PC-9 (cell line): ENCODE measurements at regions of chr1 and their contacts with region 1.

Region 1: GRCh38 chr1:231211005-231211857 is 29.8 kb upstream of the GNPAT start:
- DNase-seq: peak; percentile 71 to 88
- H3K4me3 ChIP-seq: peak overlapping the region; percentile 52
- H3K27ac ChIP-seq: no peak overlapping the region
- H3K4me1 ChIP-seq: no peaks in the 10 kb centered on the region
- H3K27me3 ChIP-seq: peaks cover 20% of the 10 kb centered on the region
- CTCF ChIP-seq: peak; percentile 95

Region 2: DNA sequence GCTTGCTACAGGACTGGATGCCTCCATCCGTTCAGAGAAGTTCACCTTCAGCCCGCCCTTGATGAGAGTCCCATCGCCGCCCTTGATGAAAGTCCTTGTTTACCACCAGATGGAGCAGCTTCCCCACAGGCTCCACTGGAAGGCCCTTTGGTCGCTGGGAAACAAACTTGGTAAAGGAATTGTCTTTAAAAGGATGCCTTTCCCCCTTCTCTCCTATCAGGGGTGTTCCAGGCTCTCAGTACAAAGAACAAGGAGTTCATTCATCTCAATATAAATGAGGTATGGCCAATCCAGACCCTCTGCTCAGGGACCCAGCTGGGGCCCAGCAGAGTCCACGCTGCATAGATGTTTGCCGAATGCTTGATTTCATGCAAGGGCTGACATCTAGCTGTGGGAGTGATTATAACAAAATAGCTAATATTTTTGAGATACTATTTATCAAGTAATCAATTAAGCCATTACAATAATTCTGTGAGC is 413.3 kb before region 1 on chr1:
- CTCF ChIA-PET with region 1: no interaction called
- POLR2A ChIA-PET with region 1: no interaction called
- intact Hi-C with region 1: loop called (anchors 1 kb)
- DNase-seq: peak; percentile 43 to 49
- H3K4me3 ChIP-seq: no peak overlapping the region
- H3K27ac ChIP-seq: no peak overlapping the region
- H3K4me1 ChIP-seq: no peaks in the 10 kb centered on the region
- H3K27me3 ChIP-seq: no peaks in the 10 kb centered on the region
- CTCF ChIP-seq: peak; percentile 76

Region 3: GRCh38 chr1:230909974-230910754 is 301.1 kb before region 1 on chr1:
- CTCF ChIA-PET with region 1: no interaction called
- POLR2A ChIA-PET with region 1: interaction called, 8 read pairs
- intact Hi-C with region 1: loop called (anchors 5 kb)
- DNase-seq: no peak
- H3K4me3 ChIP-seq: no peak overlapping the region
- H3K27ac ChIP-seq: no peak overlapping the region
- H3K4me1 ChIP-seq: no peaks in the 10 kb centered on the region
- H3K27me3 ChIP-seq: no peaks in the 10 kb centered on the region
- CTCF ChIP-seq: no peak

Region 4: DNA sequence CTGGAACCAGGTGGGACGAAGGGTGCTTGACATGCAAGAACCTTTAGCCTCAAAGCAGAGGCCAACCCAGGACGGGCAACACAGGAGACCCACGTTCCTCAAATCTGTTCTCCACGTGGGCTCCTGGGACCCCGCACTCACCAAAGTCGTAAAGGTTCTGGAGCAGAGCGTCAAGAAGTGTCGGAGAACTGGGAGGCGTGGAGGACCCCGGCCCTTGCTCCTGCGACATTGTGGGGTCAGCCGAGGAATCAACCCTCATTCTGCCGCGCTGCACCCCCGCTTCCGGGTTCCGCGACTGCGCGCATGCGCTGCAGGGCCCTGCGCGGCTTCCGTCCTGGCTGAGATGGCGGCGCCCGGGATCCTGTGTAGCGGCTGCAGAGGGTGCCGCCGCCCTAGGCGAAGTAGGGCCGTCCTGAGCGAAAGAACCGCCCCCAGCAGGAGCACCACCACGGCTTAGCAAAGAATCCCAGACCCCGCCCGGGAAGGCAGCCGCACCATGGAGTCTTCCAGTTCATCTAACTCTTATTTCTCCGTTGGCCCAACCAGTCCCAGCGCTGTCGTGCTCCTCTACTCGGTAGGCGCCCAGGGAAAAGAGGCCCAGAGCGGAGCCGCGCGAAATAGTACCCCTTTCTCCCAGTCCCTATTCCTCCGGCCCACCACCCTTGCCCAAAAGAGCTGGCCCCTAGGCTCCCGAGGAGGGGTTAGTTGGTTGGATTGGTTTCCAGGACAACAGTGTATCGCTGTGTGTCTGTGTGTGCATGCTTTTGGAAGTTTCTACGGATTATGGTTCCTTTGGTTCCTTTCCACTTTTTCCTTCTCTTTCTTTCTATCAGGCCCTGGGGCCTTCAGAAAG is 29.9 kb after region 1 on chr1 and contains the start of gene GNPAT:
- CTCF ChIA-PET with region 1: no interaction called
- POLR2A ChIA-PET with region 1: no interaction called
- intact Hi-C with region 1: loop called (anchors 1 kb)
- DNase-seq: peak; percentile 75 to 89
- H3K4me3 ChIP-seq: peak within 1 kb of the TSS; percentile 98
- H3K27ac ChIP-seq: peak within 1 kb of the TSS; percentile 46; the same call in 1 of the 2 replicates
- H3K4me1 ChIP-seq: peaks cover 19% of the 10 kb centered on the region
- H3K27me3 ChIP-seq: no peaks in the 10 kb centered on the region
- CTCF ChIP-seq: no peak
- total RNA-seq, gene GNPAT: 21.8 and 22.3 TPM in 2 replicates